HepG2 (cell line): ENCODE measurements at regions of chr1 and their contacts with region 1.

Region 1: DNA sequence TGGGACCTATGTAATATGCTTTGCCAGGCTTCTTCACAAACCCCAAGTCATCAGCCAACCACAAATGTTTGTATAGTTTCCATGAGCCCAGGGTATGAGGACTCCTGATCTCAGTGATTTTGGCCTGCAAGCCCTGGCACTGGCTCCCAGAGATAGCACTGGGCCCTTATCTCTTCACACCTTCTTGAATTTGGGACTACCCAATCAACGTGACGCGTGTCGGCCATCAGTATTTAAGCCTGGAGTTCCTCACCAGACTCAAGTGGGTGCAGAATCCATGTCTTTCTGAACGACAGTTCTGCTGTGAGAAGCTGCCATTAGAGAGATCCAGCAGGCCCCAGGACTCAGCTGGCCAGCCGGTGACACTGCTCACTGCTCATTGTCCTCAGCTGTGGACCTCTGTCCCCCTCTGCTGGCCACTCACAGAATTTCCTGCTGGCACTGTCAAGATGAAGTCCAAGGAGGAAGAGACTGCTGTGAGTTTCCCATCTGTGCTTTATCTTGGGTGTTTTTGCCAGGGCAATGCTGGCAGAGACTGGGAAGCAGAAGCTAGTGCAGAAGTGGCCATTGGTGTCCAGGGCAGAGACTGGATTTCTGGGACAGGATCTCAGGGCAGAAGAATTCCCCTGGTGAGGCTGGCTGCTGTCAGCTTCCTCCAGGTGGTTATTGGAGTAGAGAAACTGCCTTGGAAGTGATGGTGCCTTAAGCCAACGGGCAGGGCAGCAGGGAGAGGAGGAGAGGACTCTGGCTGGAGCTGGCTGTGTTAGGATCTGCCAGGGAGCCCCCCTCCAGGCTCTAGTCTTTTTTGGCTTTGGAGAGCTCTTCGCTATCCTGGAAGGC is 28.4 kb downstream of the TMCC2 start:
- DNase-seq: peak; percentile 69
- ATAC-seq: peak; percentile 92
- H3K4me3 ChIP-seq: no peak overlapping the region
- H3K27ac ChIP-seq: no peak overlapping the region
- H3K4me1 ChIP-seq: peaks cover 22% of the 10 kb centered on the region
- H3K27me3 ChIP-seq: peaks cover 3 to 48% of the 10 kb centered on the region in 2 experiments; a peak in 4 of 5 replicates
- CTCF ChIP-seq: peak; percentile 98
- EP300 ChIP-seq: no peak
- POLR2A ChIP-seq: no peak
- RAD21 ChIP-seq: peak; percentile 90

Region 2: DNA sequence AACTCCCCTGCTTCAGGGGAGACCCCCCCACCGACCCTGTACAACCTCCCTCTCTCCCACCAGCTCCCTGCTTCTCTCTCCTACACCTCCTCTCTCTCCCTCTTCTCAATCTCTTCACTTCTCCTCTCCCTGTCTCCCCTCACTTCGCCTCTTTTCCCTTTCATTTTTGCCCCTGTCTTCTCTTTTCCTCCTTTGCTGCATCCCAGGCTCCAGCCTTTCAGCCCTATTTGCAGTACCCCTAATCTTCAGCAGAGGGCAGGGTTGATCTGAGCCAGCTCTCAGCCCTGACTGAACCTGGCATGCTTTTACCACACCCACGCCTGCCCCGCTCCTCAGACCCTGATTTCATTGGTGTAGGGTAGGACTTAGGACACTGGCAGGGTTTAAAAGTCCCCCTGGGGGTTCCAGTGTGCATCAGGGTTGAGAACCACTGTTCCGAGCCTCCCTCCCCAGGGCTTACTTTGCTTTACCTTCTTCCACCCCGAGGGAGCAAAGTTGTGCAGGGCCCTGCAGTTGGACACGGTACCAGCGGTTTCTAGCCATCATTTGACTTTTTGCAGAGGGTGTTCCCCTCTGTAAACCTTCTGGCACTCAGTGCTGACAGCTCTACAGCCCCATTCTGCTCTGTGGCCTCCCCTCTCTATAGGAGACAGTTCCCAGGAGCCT is 280.5 kb before region 1 on chr1:
- CTCF ChIA-PET with region 1: interaction called, 21 read pairs
- POLR2A ChIA-PET with region 1: no interaction called
- in situ Hi-C with region 1: loop called (anchors 5 kb)
- intact Hi-C with region 1: loop called (anchors 1 kb)
- DNase-seq: peak; percentile 21
- ATAC-seq: peak; percentile 91
- H3K4me3 ChIP-seq: no peak overlapping the region
- H3K27ac ChIP-seq: no peak overlapping the region
- H3K4me1 ChIP-seq: no peaks in the 10 kb centered on the region
- H3K27me3 ChIP-seq: peaks cover 8 to 55% of the 10 kb centered on the region in 2 experiments; a peak in 4 of 5 replicates
- CTCF ChIP-seq: peak; percentile 80
- EP300 ChIP-seq: no peak
- POLR2A ChIP-seq: no peak
- RAD21 ChIP-seq: peak; percentile 43; the same call in 1 of the 2 replicates

Region 3: GRCh38 chr1:204989266-204990058 is 266.7 kb before region 1 on chr1:
- CTCF ChIA-PET with region 1: interaction called, 20 read pairs
- POLR2A ChIA-PET with region 1: no interaction called
- in situ Hi-C with region 1: no loop called
- intact Hi-C with region 1: loop called (anchors 1 kb)
- DNase-seq: peak; percentile 46
- ATAC-seq: peak; percentile 86
- H3K4me3 ChIP-seq: no peak overlapping the region
- H3K27ac ChIP-seq: no peak overlapping the region
- H3K4me1 ChIP-seq: peaks cover 4% of the 10 kb centered on the region; the same call in 1 of the 2 replicates
- H3K27me3 ChIP-seq: peaks cover 14 to 70% of the 10 kb centered on the region in 2 experiments
- CTCF ChIP-seq: peak; percentile 95
- EP300 ChIP-seq: no peak
- POLR2A ChIP-seq: no peak
- RAD21 ChIP-seq: peak; percentile 91

Region 4: DNA sequence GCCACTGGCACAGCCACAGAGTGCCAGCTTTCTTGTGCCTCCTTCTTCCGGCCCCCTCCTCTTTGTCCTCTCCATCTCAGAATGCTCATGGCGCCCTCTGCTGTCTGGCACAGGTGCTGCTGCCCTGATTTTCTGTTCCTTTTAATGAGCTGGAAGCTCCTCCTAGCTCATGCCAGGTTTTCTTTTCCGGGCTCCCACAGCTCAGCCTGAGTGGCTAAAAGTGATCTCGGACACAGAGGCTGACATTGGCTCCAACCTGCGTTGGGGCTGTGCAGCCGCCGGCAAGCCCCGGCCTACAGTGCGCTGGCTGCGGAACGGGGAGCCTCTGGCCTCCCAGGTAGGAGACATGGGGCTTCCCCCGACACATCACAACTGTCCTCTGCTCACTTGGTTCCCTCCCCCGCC is 194.5 kb before region 1 on chr1:
- CTCF ChIA-PET with region 1: no interaction called
- POLR2A ChIA-PET with region 1: no interaction called
- in situ Hi-C with region 1: loop called (anchors 10 kb)
- intact Hi-C with region 1: loop called (anchors 2 kb)
- DNase-seq: peak; percentile 49
- ATAC-seq: peak; percentile 68
- H3K4me3 ChIP-seq: no peak overlapping the region
- H3K27ac ChIP-seq: no peak overlapping the region
- H3K4me1 ChIP-seq: no peaks in the 10 kb centered on the region
- H3K27me3 ChIP-seq: peaks cover 1 to 43% of the 10 kb centered on the region in 2 experiments; a peak in 3 of 5 replicates
- CTCF ChIP-seq: peak; percentile 87
- EP300 ChIP-seq: no peak
- POLR2A ChIP-seq: no peak
- RAD21 ChIP-seq: peak; percentile 77

Region 5: DNA sequence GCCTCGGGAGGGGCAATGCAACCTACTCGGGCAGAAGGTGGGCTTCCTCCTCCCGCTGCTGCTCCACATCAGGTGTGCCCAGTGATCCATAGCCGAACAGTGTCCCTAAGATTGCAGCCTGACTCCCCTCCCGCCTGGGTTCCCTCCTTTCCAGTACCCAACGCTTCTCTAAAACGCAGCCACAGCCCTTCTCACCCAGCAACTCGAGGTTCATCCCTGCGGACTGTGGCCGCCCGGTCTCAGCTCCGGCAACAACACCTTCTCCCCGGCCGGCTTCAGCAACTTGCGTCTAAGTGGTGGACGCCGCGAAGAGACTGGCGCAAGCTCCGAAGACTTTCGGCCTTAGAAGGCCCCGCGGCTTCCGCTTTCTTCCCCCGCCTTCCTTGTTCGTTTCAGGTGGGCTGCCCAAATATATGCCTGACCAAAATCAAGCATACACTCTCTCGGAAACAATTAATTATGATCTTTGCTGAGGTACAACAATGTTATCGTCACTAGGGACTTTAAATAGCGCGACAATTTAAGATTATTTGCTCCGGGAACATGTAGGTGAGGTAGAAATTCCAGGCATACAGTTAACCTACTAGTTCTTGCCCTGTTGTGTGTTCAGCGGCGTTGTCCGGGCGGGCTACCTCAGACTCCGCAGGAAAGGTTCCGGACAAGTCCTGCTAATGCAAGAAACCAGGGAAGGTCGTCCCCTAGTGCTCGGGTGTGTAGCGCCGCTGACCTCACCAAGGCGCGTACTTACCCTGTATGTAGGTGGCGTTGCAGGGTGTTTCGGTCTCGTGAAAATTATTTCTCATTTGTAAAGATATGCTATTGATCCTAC is 134.3 kb before region 1 on chr1 and contains the start of gene RBBP5:
- CTCF ChIA-PET with region 1: no interaction called
- POLR2A ChIA-PET with region 1: no interaction called
- in situ Hi-C with region 1: no loop called
- intact Hi-C with region 1: loop called (anchors 5 kb)
- DNase-seq: peak; percentile 94
- ATAC-seq: peak; percentile 99
- H3K4me3 ChIP-seq: peak within 1 kb of the TSS; percentile 85 to 95 (median 85)
- H3K27ac ChIP-seq: peak within 1 kb of the TSS; percentile 94
- H3K4me1 ChIP-seq: peaks cover 31% of the 10 kb centered on the region
- H3K27me3 ChIP-seq: no peaks in the 10 kb centered on the region; a peak in 1 of 5 replicates
- CTCF ChIP-seq: peak; percentile 92
- EP300 ChIP-seq: peak; percentile 50 to 53; a peak in 2 of 4 replicates
- POLR2A ChIP-seq: peak; percentile 86 to 89
- RAD21 ChIP-seq: peak; percentile 64
- total RNA-seq, gene RBBP5: 17.1 and 26.2 TPM in 2 replicates

Region 6: DNA sequence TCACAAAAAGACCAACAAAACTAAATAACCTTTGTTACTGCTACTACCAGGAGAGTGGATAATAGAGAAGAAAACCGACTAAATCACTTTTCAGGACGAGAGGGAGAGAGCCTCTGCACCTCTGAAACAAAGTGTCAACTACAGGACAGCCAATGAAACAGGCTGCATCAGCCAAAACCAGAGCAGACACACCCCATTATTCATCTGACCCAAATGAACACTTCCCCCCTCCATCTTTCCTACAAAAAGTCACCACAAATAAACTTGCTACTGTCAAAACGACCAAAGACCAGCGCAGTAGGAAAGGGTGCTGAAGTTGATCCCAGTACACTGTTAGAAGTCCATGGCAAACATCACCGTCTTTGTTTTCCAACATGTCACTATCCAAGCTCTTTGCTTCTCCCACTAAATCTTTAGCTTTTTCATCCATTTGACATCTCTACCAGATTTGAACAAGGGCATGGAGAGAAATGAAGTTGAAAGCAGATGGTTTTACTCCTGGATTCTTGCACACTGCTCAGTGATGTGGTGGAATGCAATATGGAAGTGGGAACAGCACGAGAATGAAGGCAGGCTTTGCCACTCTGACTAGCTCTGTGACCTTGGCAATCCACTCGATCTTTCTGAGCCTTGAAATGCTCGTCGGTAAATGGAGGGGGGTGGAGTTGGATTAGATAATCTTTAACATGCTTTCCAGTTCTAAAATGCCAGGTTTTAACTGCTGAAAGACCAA is 65.2 kb before region 1 on chr1:
- CTCF ChIA-PET with region 1: no interaction called
- POLR2A ChIA-PET with region 1: no interaction called
- in situ Hi-C with region 1: no loop called
- intact Hi-C with region 1: loop called (anchors 2 kb)
- DNase-seq: peak; percentile 73
- ATAC-seq: peak; percentile 98
- H3K4me3 ChIP-seq: peak overlapping the region; percentile 33 to 35 (median 34); a peak in 3 of 6 replicates
- H3K27ac ChIP-seq: peak overlapping the region; percentile 52
- H3K4me1 ChIP-seq: peaks cover 40% of the 10 kb centered on the region
- H3K27me3 ChIP-seq: no peaks in the 10 kb centered on the region
- CTCF ChIP-seq: no peak
- EP300 ChIP-seq: no peak
- POLR2A ChIP-seq: no peak
- RAD21 ChIP-seq: no peak

Region 7: GRCh38 chr1:205229399-205229871 is 26.7 kb before region 1 on chr1:
- CTCF ChIA-PET with region 1: interaction called, 4 read pairs
- POLR2A ChIA-PET with region 1: interaction called, 3 read pairs
- in situ Hi-C with region 1: no loop called
- intact Hi-C with region 1: loop called (anchors 1 kb)
- DNase-seq: peak; percentile 42
- ATAC-seq: peak; percentile 74
- H3K4me3 ChIP-seq: peak overlapping the region in 1 of 3 experiments; percentile 78; a peak in 1 of 6 replicates
- H3K27ac ChIP-seq: no peak overlapping the region
- H3K4me1 ChIP-seq: peaks cover 30% of the 10 kb centered on the region
- H3K27me3 ChIP-seq: peaks cover 4 to 42% of the 10 kb centered on the region in 2 experiments; a peak in 4 of 5 replicates
- CTCF ChIP-seq: peak; percentile 58
- EP300 ChIP-seq: no peak
- POLR2A ChIP-seq: no peak
- RAD21 ChIP-seq: no peak

Region 8: DNA sequence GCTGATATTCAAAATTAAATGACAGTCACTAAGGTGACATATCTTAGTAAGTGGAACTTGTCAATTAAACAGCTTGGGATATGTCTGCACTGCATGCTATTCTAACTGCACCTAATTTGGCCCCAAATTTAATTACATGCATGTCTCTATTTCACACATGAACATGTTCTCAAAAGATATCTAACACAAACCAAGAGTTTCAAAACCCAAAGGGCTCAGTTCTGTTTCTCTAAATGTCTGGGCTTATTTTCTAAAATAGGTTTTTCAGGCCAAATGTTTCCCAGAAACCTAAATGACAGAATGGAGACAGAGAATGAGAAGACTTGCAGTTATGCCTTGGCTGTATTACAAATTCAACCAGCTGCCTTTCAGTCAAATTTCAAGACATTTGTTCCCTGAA is 507.8 kb after region 1 on chr1:
- CTCF ChIA-PET with region 1: no interaction called
- POLR2A ChIA-PET with region 1: no interaction called
- in situ Hi-C with region 1: no loop called
- intact Hi-C with region 1: no loop called
- DNase-seq: no peak
- ATAC-seq: no peak
- H3K4me3 ChIP-seq: no peak overlapping the region
- H3K27ac ChIP-seq: no peak overlapping the region
- H3K4me1 ChIP-seq: no peaks in the 10 kb centered on the region
- H3K27me3 ChIP-seq: no peaks in the 10 kb centered on the region
- CTCF ChIP-seq: no peak
- EP300 ChIP-seq: no peak
- POLR2A ChIP-seq: no peak
- RAD21 ChIP-seq: no peak